Aorta (tissue), 5 donors: ENCODE measurements at regions of chr3 and their contacts with region 1.

Region 1: DNA sequence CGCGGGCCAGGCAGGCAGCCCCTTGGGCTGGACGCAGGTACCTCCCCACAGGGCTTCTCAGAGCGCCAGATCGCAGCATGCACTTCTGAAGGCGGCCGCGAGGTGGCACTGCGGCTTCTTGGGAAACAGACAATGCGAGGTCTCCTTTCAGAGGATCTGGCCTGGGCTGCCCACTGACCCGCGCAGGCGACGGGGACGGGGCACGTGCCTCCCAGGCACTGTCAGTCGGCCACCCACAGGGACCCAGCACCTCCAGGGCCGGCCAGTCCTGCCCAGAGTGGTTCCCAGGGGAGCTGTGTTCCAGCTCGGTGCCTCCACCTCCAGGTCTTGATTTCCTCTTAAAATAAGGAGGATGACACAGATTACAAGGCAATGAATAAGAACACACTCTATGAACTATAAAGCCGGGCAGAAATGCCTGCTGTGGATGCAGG is 24.4 kb upstream of the TXNRD3 start:
- DNase-seq: peak; percentile 85 to 95
- ATAC-seq: peak; percentile 92
- H3K4me3 ChIP-seq: no peak overlapping the region
- H3K27ac ChIP-seq: no peak overlapping the region
- H3K4me1 ChIP-seq: no peaks in the 10 kb centered on the region
- H3K27me3 ChIP-seq: no peaks in the 10 kb centered on the region

Region 2: DNA sequence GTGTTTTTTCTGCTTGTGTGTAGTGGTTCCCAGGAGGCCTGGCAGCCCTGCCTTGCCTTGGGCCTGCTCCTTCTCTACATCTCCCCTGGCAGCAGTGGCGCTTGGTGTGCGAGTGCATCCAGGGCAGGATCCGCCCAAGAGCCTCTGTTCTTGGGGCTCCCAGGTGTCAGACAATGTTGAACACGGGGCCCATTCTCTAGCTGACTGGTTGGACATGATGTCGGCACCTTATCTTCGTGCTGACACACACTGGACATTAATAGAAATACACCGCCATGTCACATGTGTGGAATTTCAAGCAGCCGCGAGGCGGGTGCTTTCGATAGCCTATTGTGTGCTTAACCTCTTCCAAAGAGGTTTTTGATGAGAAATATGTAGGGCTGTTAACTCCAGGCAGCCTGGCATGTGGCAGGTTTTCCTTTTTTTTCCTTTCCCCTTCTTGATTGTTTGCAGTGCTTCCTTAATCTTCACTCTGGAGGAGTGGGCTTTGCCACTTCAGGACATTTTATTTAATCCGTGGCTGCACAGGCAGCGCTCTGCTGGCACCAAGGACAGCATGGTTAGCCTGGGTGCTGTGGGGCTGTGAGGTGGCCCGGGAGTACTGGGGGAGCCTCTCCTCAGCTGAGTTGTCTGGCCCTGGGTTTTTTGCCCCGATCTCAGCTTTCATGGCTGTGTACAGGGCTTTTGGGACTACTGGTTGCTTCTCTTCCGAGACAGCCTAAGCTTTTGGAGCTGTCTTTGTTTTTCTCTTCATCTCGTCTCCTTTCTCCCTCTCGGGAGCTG is 67.3 kb after region 1 on chr3:
- intact Hi-C with region 1: loop called (anchors 5 kb)
- DNase-seq: peak in 1 of 2 donors; percentile 79
- ATAC-seq: peak; percentile 74
- H3K4me3 ChIP-seq: no peak overlapping the region
- H3K27ac ChIP-seq: peak overlapping the region; percentile 53 to 88
- H3K4me1 ChIP-seq: peaks cover 4 to 5% of the 10 kb centered on the region in 2 donors
- H3K27me3 ChIP-seq: no peaks in the 10 kb centered on the region

Region 3: GRCh38 chr3:126752303-126752842 is 73.0 kb after region 1 on chr3:
- intact Hi-C with region 1: loop called (anchors 5 kb)
- DNase-seq: peak; percentile 85 to 92
- ATAC-seq: peak; percentile 84
- H3K4me3 ChIP-seq: no peak overlapping the region
- H3K27ac ChIP-seq: no peak overlapping the region
- H3K4me1 ChIP-seq: no peaks in the 10 kb centered on the region
- H3K27me3 ChIP-seq: no peaks in the 10 kb centered on the region

Region 4: GRCh38 chr3:126782554-126782953 is 103.2 kb after region 1 on chr3:
- intact Hi-C with region 1: no loop called
- DNase-seq: no peak
- ATAC-seq: no peak
- H3K4me3 ChIP-seq: no peak overlapping the region
- H3K27ac ChIP-seq: no peak overlapping the region
- H3K4me1 ChIP-seq: peaks cover 0 to 2% of the 10 kb centered on the region in 2 donors
- H3K27me3 ChIP-seq: no peaks in the 10 kb centered on the region

Region 5: DNA sequence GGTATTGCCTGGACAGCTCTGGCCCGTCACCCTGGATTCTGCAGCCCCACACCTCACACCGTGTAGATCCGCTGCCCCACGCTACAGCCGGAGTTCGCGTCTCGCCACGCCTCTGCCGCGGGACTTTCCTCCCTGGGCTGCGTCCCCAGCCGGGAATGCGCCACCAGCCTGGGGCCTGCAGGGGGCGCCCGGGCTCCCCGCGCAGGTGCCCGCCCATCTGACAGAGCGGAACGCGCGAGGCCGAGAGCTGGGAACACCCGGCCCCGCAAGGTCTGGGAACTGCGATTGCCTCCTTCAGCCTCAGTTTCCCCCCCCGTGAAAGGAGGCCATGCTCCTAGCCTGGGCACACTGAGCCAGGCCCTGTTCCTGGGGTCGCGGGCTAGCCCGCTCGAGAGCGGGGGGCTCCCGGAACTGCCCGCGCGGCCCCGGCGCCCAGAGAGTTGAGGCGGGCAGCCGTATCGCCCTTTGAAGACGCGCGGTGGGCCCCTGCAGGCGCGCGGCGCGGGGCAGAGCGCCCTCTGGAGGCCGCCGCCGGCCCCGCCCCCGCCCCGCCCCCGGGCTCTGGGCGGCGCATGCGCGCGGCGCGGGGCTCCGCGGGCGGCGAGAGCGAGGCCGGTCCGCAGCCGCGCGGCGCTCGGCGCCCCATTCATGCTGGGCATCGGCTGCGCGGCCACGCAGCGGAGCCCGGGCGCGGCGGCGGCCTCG is 303.3 kb after region 1 on chr3 and contains the start of gene PLXNA1:
- intact Hi-C with region 1: loop called (anchors 2 to 10 kb)
- DNase-seq: peak; percentile 90 to 94
- ATAC-seq: peak; percentile 93
- H3K4me3 ChIP-seq: peak within 1 kb of the TSS; percentile 72 to 86
- H3K27ac ChIP-seq: peak within 1 kb of the TSS in 1 of 2 donors; percentile 71
- H3K4me1 ChIP-seq: no peaks in the 10 kb centered on the region
- H3K27me3 ChIP-seq: no peaks in the 10 kb centered on the region
- total RNA-seq, gene PLXNA1: 28.7 to 51.3 TPM

Region 6: GRCh38 chr3:127172781-127173515 is 493.6 kb after region 1 on chr3:
- intact Hi-C with region 1: loop called in 1 of 2 experiments (anchors 10 kb)
- DNase-seq: peak in 1 of 2 donors; percentile 84
- ATAC-seq: peak; percentile 54
- H3K4me3 ChIP-seq: no peak overlapping the region
- H3K27ac ChIP-seq: no peak overlapping the region
- H3K4me1 ChIP-seq: peaks cover 0 to 3% of the 10 kb centered on the region in 2 donors
- H3K27me3 ChIP-seq: no peaks in the 10 kb centered on the region

Region 7: DNA sequence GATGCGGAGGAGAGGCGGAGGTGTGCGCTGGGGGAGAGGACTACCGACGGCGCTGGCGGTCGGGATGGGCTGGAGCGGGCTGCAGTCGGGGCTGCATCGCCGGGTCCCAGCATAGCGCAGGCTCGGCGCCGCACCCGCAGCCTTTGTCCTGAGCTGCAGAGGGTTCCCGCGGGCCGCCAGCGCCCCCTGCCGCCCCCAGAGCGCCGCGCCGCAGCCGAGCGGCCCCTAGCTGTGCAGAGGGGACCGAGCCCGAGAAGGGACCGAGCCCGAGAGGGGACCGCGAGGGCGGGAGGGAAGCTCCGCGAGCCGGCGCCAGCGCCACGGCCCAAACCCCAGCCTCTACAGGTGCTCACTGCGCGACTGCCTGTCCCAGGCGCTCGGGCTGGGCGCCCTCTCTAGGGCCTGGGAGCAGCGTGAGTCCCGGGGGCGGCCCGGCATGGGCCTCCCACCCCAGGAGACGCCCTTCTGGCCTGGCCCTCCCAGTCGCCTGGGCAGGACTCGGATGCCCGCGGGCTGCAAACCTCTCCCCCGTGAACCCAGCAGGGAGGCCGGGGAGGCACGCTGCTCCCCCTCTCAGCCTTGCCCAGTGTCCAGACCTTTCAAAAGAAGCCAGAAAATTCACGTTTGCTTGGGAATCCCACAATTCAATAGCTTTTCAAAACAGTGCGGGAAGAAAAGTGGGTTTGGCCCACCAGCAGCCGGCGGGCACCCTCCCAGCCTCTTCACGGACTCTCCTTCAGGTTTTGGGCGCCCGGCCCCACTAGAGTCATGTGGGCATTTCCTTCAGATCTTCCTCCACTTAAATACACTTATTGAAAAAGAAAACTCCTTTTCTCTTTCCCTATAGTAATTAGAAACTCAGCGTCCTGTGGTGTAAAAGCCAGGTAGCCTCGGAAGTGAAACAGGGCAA is 776.5 kb after region 1 on chr3:
- intact Hi-C with region 1: loop called in 1 of 2 experiments (anchors 5 kb)
- DNase-seq: peak; percentile 73 to 92
- ATAC-seq: peak; percentile 89
- H3K4me3 ChIP-seq: no peak overlapping the region
- H3K27ac ChIP-seq: no peak overlapping the region
- H3K4me1 ChIP-seq: no peaks in the 10 kb centered on the region
- H3K27me3 ChIP-seq: no peaks in the 10 kb centered on the region

Region 8: GRCh38 chr3:127544192-127544802 is 865.0 kb after region 1 on chr3:
- intact Hi-C with region 1: loop called (anchors 2 to 10 kb)
- DNase-seq: peak; percentile 82 to 88
- ATAC-seq: peak; percentile 30
- H3K4me3 ChIP-seq: no peak overlapping the region
- H3K27ac ChIP-seq: no peak overlapping the region
- H3K4me1 ChIP-seq: no peaks in the 10 kb centered on the region
- H3K27me3 ChIP-seq: no peaks in the 10 kb centered on the region